Activated B cell treated with CpG ODN at 0.5 μM for 24 hours (primary cell): ENCODE measurements at regions of chr5 and their contacts with region 1.

Region 1: GRCh38 chr5:96868603-96869371 is 7.5 kb upstream of the ERAP2 start:
- DNase-seq: no peak
- ATAC-seq: peak; percentile 82
- H3K4me3 Mint-ChIP-seq: peak overlapping the region; percentile 54
- H3K27ac Mint-ChIP-seq: peak overlapping the region; percentile 78
- H3K4me1 Mint-ChIP-seq: peaks cover 47% of the 10 kb centered on the region
- H3K27me3 Mint-ChIP-seq: no peaks in the 10 kb centered on the region
- CTCF ChIP-seq: peak; percentile 43

Region 2: DNA sequence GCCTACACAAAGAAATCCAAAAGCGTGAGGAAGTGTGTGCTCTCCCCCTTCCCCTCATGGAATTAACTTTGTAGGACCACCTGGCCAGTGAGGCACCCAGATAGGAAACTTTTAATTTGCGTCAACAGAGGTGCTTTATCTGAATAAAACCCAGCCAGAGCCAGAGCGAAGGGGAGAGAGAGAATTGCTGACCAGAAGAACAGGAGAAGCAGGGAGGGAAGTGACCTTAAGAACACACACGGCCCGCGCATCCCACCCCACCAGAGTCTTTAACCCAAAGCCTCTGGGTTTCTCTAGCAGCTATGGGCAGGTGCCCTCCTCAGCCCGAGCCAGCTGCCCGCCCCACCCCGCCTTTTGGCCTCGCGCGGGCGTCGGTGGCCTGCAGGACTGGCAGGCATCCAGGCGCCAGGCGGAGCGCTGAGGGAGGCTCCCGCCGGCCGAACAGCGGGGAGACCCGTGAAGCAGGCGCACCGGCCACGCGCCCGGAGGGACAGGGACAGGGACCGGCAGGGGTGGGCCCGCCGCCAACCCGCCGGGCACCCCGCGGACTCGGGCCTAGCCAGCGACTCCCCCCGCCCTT is 61.6 kb before region 1 on chr5:
- CTCF ChIA-PET with region 1: interaction called, 21 read pairs
- POLR2A ChIA-PET with region 1: interaction called, 30 read pairs
- intact Hi-C with region 1: loop called (anchors 1 kb)
- DNase-seq: no peak
- ATAC-seq: peak; percentile 12
- H3K4me3 Mint-ChIP-seq: peak overlapping the region; percentile 97
- H3K27ac Mint-ChIP-seq: peak overlapping the region; percentile 99
- H3K4me1 Mint-ChIP-seq: peaks cover 48% of the 10 kb centered on the region
- H3K27me3 Mint-ChIP-seq: no peaks in the 10 kb centered on the region
- CTCF ChIP-seq: no peak

Region 3: DNA sequence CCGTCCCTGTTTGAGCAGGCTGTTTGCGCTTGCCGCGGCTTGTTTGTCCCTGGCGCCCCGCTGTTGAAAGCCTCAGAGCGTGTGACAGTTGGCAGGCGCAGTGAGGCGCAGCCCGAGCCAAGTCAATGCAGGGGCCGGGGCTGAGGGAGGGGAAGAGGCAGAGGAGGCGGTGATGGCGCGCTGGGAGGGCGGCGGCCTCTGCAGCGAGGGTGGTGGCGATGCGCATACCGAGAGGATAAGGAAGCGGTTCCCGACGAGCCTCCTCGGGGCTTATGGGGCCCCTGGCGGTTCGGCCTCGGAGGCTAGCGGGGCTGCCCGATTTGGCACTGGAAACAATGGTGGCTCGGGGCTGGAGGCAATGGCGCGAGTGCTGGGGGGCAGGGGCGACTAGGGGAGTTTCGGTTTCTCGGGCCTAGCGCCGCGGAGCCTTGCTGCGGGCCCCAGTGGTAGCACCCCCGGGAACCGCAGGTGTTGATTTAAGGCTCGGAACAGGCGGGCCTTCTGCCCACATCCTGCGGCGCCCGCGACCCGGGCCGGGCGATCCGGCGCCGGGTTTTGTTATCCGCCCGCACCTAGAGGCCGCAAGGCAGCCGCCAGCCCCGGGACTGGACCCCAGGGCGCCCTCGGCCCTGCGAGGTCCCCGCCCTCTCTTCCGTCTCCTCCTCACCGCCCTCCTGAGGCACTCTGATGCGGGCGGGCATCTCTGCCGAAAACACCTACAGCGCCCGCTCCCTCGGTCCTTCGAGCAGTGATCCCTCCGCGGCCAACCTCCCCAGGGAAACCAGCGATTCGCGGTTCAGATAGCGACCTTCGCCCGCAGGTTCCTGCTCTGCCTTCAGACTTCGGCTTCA is 66.1 kb after region 1 on chr5:
- CTCF ChIA-PET with region 1: interaction called, 35 read pairs
- POLR2A ChIA-PET with region 1: interaction called, 94 read pairs
- intact Hi-C with region 1: loop called (anchors 1 kb)
- DNase-seq: peak; percentile 97
- ATAC-seq: peak; percentile 69
- H3K4me3 Mint-ChIP-seq: peak overlapping the region; percentile 98
- H3K27ac Mint-ChIP-seq: peak overlapping the region; percentile 98
- H3K4me1 Mint-ChIP-seq: peaks cover 78% of the 10 kb centered on the region
- H3K27me3 Mint-ChIP-seq: no peaks in the 10 kb centered on the region
- CTCF ChIP-seq: no peak

Region 4: DNA sequence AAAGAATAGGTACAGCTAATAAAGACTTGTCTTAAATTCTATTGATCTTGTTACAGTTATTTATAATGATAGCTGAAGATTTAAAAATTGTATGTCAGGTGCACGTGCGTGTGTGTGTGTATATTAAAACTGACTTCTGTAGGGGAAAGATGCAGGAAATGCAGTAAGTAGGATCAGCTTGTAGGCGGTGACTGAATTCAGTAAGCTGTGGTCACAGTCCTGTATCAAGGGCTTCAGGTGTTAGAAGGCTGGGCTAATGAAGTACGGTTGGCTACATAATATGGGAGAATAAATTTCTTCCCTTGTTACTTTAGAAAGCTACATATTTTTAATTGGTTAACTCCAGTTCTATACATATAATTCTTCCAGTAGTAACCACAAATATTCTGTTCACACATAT is 121.3 kb after region 1 on chr5:
- CTCF ChIA-PET with region 1: interaction called, 82 read pairs
- POLR2A ChIA-PET with region 1: no interaction called
- intact Hi-C with region 1: no loop called
- DNase-seq: no peak
- ATAC-seq: no peak
- H3K4me3 Mint-ChIP-seq: no peak overlapping the region
- H3K27ac Mint-ChIP-seq: no peak overlapping the region
- H3K4me1 Mint-ChIP-seq: no peaks in the 10 kb centered on the region
- H3K27me3 Mint-ChIP-seq: no peaks in the 10 kb centered on the region
- CTCF ChIP-seq: no peak

Region 5: GRCh38 chr5:97044052-97044451 is 175.3 kb after region 1 on chr5:
- CTCF ChIA-PET with region 1: interaction called, 13 read pairs
- POLR2A ChIA-PET with region 1: no interaction called
- intact Hi-C with region 1: no loop called
- DNase-seq: no peak
- ATAC-seq: no peak
- H3K4me3 Mint-ChIP-seq: no peak overlapping the region
- H3K27ac Mint-ChIP-seq: no peak overlapping the region
- H3K4me1 Mint-ChIP-seq: no peaks in the 10 kb centered on the region
- H3K27me3 Mint-ChIP-seq: no peaks in the 10 kb centered on the region
- CTCF ChIP-seq: no peak

Region 6: GRCh38 chr5:98004463-98004862 is 1135.7 kb after region 1 on chr5:
- CTCF ChIA-PET with region 1: no interaction called
- POLR2A ChIA-PET with region 1: no interaction called
- intact Hi-C with region 1: no loop called
- DNase-seq: no peak
- ATAC-seq: no peak
- H3K4me3 Mint-ChIP-seq: no peak overlapping the region
- H3K27ac Mint-ChIP-seq: no peak overlapping the region
- H3K4me1 Mint-ChIP-seq: no peaks in the 10 kb centered on the region
- H3K27me3 Mint-ChIP-seq: no peaks in the 10 kb centered on the region
- CTCF ChIP-seq: no peak

Region 7: GRCh38 chr5:98773464-98774191 is 1904.8 kb after region 1 on chr5 and contains the start of gene RGMB:
- CTCF ChIA-PET with region 1: no interaction called
- POLR2A ChIA-PET with region 1: no interaction called
- intact Hi-C with region 1: loop called (anchors 5 kb)
- DNase-seq: peak; percentile 83
- ATAC-seq: peak; percentile 89
- H3K4me3 Mint-ChIP-seq: peak within 1 kb of the TSS; percentile 96
- H3K27ac Mint-ChIP-seq: peak within 1 kb of the TSS; percentile 96
- H3K4me1 Mint-ChIP-seq: peaks cover 55% of the 10 kb centered on the region
- H3K27me3 Mint-ChIP-seq: peaks cover 2% of the 10 kb centered on the region
- CTCF ChIP-seq: no peak
- total RNA-seq, gene RGMB: 12.7 and 13.8 TPM in 2 replicates